Activated T-helper 1 cell treated with anti-CD3 and anti-CD28 coated beads, Interleukin-12 subunit alpha, Interleukin-12 subunit beta, Interleukin-2, Interleukin-4 antibody, amounts not matched to agents 30 ng/mL and 10 ng/mL and 1 ng/mL, durations not matched to agents 14 hours and 24 hours and 36 hours (primary cell): ENCODE measurements at regions of chr1 and their contacts with region 1.

Region 1: DNA sequence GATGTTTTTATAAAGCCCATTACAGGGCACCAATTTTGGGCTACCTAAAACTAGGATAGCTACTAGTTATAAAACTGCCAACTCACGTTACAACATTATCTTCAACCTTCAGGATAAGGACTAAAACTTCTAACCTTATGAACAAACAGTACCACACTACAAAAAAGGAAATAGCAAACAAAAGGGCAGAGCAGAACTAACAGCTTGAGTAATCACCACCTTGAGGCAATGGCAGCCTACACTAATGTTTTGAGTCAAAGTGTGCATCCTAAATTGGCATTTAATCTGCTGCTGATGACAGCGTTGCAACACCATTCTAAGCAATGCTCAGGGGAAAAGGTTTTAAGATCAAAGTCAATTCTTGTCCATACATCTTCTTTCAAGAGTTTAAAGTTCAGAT is 27.2 kb downstream of the PTP4A2 start:
- DNase-seq: no peak
- H3K4me3 Mint-ChIP-seq: peak overlapping the region; percentile 1
- H3K27ac Mint-ChIP-seq: peak overlapping the region; percentile 33
- H3K4me1 Mint-ChIP-seq: peaks cover 51% of the 10 kb centered on the region
- H3K27me3 Mint-ChIP-seq: no peaks in the 10 kb centered on the region

Region 2: GRCh38 chr1:31815752-31816500 is 95.0 kb before region 1 on chr1 and contains the start of gene SPOCD1:
- intact Hi-C with region 1: loop called (anchors 5 kb)
- DNase-seq: peak; percentile 74
- H3K4me3 Mint-ChIP-seq: no peak within 1 kb of the TSS
- H3K27ac Mint-ChIP-seq: no peak within 1 kb of the TSS
- H3K4me1 Mint-ChIP-seq: peaks cover 10% of the 10 kb centered on the region
- H3K27me3 Mint-ChIP-seq: peaks cover 6% of the 10 kb centered on the region
- total RNA-seq, gene SPOCD1: not detected in 2 replicates

Region 3: GRCh38 chr1:31923901-31924535 is 13.1 kb after region 1 on chr1:
- intact Hi-C with region 1: loop called (anchors 1 kb)
- DNase-seq: no peak
- H3K4me3 Mint-ChIP-seq: peak overlapping the region; percentile 68
- H3K27ac Mint-ChIP-seq: peak overlapping the region; percentile 88
- H3K4me1 Mint-ChIP-seq: peaks cover 83% of the 10 kb centered on the region
- H3K27me3 Mint-ChIP-seq: no peaks in the 10 kb centered on the region

Region 4: GRCh38 chr1:31955917-31956736 is 45.2 kb after region 1 on chr1:
- intact Hi-C with region 1: loop called (anchors 1 kb)
- DNase-seq: peak; percentile 84
- H3K4me3 Mint-ChIP-seq: peak overlapping the region; percentile 59
- H3K27ac Mint-ChIP-seq: peak overlapping the region; percentile 83
- H3K4me1 Mint-ChIP-seq: peaks cover 78% of the 10 kb centered on the region
- H3K27me3 Mint-ChIP-seq: no peaks in the 10 kb centered on the region